Common myeloid progenitor, CD34-positive (primary cell): ENCODE measurements at regions of chr1 and their contacts with region 1.

Region 1: DNA sequence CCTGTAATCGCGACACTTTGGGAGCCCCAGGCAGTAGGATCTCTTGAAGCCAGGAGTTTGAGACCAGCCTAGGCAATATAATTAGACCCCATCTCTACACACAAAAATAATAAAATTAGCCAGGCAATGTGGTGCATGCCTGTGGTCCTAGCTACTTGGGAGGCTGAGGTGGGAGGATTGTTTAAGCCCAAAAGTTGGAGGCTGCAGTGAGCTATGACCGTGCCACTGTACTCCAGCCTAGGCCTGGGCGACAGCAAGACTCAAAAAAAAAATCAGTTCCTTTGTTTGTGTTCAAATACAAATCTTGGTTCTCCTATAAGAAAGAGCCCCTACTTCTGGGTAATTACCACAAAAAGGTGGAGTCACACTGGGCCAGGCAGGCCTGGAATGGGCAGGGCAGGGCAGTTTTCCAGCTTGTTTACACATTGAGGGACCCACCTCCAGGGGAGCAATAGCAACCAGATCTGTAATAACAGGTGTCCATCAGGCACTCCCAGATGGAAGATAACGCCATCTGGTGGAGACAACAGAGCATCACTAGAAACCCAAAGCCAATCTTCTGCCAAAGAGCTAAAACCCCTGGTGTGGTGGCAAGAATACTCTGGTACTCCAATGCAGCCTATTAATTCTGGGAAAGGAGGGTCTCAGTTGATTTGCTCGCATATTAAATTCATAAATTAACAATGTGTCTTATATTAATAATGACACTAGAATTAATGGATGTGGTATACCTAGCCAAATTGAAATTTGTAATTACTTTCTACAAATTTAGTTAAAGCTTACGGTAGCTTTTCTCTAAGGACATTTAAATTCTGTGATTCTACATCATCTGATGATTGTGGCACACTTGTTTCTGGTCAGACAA is 13.2 kb downstream of the PPP1R15B start:
- DNase-seq: peak; percentile 89 to 90 (median 90)
- H3K4me3 ChIP-seq: no peak overlapping the region
- H3K27ac ChIP-seq: no peak overlapping the region
- H3K4me1 ChIP-seq: peaks cover 0 to 2% (median 0%) of the 10 kb centered on the region in 4 experiments
- H3K27me3 ChIP-seq: no peaks in the 10 kb centered on the region

Region 2: GRCh38 chr1:204377795-204378608 is 20.4 kb before region 1 on chr1:
- CTCF ChIA-PET with region 1: interaction called, 24 read pairs
- POLR2A ChIA-PET with region 1: no interaction called
- DNase-seq: peak in 2 of 3 donors; percentile 60 to 72
- H3K4me3 ChIP-seq: peak overlapping the region; percentile 37 to 75 (median 67)
- H3K27ac ChIP-seq: no peak overlapping the region
- H3K4me1 ChIP-seq: peaks cover 0 to 35% (median 23%) of the 10 kb centered on the region in 4 experiments
- H3K27me3 ChIP-seq: peaks cover 0 to 4% (median 3%) of the 10 kb centered on the region in 5 experiments

Region 3: DNA sequence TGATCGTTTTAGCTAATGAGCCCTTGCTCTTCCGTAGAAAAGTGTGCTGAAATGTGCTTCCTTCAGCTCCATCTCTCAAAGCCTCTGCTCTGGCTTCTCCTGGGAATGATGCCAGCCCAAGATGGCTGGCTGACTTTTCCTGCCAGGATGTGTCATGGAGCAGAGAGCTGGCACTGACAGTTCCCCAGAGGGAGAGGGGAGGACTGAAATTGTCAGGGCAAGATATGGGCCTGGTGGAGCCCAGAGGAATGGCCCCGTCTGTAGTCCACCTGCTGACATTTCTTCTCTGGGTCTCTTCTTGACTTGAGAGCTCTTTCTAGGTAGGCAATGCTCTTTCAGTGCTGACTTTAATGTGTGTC is 13.5 kb before region 1 on chr1:
- CTCF ChIA-PET with region 1: interaction called, 24 read pairs
- POLR2A ChIA-PET with region 1: interaction called, 3 read pairs
- DNase-seq: no peak
- H3K4me3 ChIP-seq: no peak overlapping the region
- H3K27ac ChIP-seq: no peak overlapping the region
- H3K4me1 ChIP-seq: peaks cover 5 to 14% (median 10%) of the 10 kb centered on the region in 4 experiments
- H3K27me3 ChIP-seq: no peaks in the 10 kb centered on the region

Region 4: GRCh38 chr1:204411451-204412204 is 13.2 kb after region 1 on chr1 and contains the start of gene PPP1R15B:
- CTCF ChIA-PET with region 1: interaction called, 40 read pairs
- POLR2A ChIA-PET with region 1: interaction called, 3 read pairs
- DNase-seq: peak; percentile 98 to 99 (median 99)
- H3K4me3 ChIP-seq: peak within 1 kb of the TSS; percentile 92 to 100 (median 99)
- H3K27ac ChIP-seq: peak within 1 kb of the TSS; percentile 99 to 100
- H3K4me1 ChIP-seq: peaks cover 23 to 57% (median 40%) of the 10 kb centered on the region in 4 experiments
- H3K27me3 ChIP-seq: no peaks in the 10 kb centered on the region

Region 5: DNA sequence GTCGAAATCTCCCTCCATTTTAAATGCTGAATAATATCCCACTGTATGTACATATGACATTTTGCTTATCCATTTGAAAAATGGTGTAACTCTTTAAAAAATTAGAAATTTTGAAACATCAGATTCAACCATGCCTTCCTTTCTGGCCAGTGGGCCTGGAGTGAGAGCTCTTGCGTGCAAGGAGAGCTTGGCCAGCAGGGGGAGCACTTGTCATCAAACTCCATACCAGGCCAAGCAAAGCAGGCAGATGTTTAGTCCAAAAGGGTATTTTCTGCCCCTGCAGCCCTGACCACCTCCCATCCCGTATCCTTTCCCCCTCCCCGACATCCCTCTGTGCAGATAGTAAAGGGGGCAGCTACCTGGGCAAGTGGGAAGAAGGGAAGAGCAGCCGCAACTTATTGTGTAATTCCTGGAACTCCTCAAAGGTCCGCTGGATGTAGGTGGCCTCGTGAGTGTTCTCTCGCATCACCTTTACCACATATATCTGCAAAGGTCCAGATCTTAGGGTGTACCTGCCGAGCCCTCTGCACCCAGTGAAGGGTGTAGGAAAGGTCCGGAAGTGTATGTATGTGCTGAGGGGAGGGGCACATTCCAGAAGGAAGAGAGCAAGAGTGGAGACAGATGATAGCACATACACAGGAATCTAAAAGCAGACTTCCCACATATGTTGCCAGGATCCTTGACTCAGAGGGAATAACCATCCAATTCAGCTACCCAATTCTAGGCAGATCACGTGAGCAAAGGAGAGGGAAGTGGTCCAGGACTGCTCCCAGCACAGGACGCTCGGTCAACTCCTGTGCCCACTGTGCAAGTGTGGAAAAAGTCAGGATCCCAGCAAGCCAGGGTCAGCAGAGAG is 33.1 kb after region 1 on chr1:
- CTCF ChIA-PET with region 1: interaction called, 10 read pairs
- POLR2A ChIA-PET with region 1: no interaction called
- DNase-seq: peak; percentile 80 to 91 (median 85)
- H3K4me3 ChIP-seq: no peak overlapping the region
- H3K27ac ChIP-seq: no peak overlapping the region
- H3K4me1 ChIP-seq: no peaks in the 10 kb centered on the region
- H3K27me3 ChIP-seq: no peaks in the 10 kb centered on the region

Region 6: GRCh38 chr1:204532832-204533231 is 134.4 kb after region 1 on chr1:
- CTCF ChIA-PET with region 1: no interaction called
- POLR2A ChIA-PET with region 1: no interaction called
- DNase-seq: no peak
- H3K4me3 ChIP-seq: no peak overlapping the region
- H3K27ac ChIP-seq: no peak overlapping the region
- H3K4me1 ChIP-seq: no peaks in the 10 kb centered on the region
- H3K27me3 ChIP-seq: no peaks in the 10 kb centered on the region